GM12878 (cell line): ENCODE measurements at regions of chr5 and their contacts with region 1.

Region 1: GRCh38 chr5:143002459-143003328 is 232.5 kb downstream of the ARHGAP26 start:
- DNase-seq: peak; percentile 82
- ATAC-seq: peak; percentile 78
- H3K4me3 ChIP-seq: no peak overlapping the region
- H3K27ac ChIP-seq: peak overlapping the region; percentile 89
- H3K4me1 ChIP-seq: peaks cover 49% of the 10 kb centered on the region
- H3K27me3 ChIP-seq: no peaks in the 10 kb centered on the region
- CTCF ChIP-seq: peak; percentile 71 to 79 (median 75)
- EP300 ChIP-seq: peak; percentile 95 to 97
- POLR2A ChIP-seq: peak; percentile 47; the same call in 1 of the 2 replicates
- RAD21 ChIP-seq: peak; percentile 86

Region 2: DNA sequence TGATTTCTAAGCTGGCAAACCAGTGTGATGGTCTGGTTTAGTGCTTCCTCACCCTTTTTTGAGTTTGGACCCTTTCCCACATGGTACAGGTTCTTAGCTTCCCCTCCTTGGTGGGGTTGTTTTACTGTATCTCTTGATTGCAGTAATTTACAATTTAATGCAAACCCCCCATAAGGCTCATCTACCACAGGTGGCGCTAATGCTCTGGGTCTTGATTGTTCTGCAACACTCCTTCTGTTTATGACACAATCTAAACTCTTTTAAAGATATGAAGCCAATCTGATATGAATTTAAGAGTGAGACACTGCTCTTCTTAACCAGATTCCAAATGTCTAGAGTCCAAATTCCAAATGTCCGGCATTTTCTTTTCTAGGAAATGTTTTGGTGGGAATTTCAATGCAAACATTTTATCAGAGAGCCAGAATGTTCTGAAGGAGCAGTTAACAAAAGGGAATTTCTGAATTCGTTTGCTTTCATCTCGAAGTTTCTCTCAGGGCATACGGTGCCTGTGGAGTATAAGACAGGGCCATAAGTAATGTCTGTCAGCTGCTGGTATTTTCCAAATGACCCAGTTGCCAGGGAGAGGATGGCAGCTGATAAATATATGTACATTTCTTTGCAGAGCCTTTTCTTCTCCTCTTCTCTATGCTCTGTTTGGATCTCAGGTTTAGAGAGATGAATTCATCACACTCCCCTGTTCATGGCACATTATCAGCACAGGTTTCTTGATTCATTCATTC is 14.3 kb after region 1 on chr5:
- CTCF ChIA-PET with region 1: interaction called, 92 read pairs
- POLR2A ChIA-PET with region 1: interaction called, 12 read pairs
- RAD21 ChIA-PET with region 1: interaction called, 37 read pairs
- SMC1A ChIA-PET with region 1: interaction called, 114 read pairs
- in situ Hi-C with region 1: no loop called
- intact Hi-C with region 1: loop called (anchors 2 kb)
- DNase-seq: no peak
- ATAC-seq: peak; percentile 28
- H3K4me3 ChIP-seq: no peak overlapping the region
- H3K27ac ChIP-seq: no peak overlapping the region
- H3K4me1 ChIP-seq: peaks cover 32% of the 10 kb centered on the region
- H3K27me3 ChIP-seq: no peaks in the 10 kb centered on the region
- CTCF ChIP-seq: peak; percentile 68 to 75 (median 72)
- EP300 ChIP-seq: peak in 1 of 2 experiments; percentile 8; a peak in 1 of 4 replicates
- POLR2A ChIP-seq: no peak
- RAD21 ChIP-seq: peak; percentile 88

Region 3: GRCh38 chr5:143094087-143094521 is 91.4 kb after region 1 on chr5:
- CTCF ChIA-PET with region 1: no interaction called
- POLR2A ChIA-PET with region 1: no interaction called
- RAD21 ChIA-PET with region 1: interaction called, 15 read pairs
- SMC1A ChIA-PET with region 1: interaction called, 7 read pairs
- in situ Hi-C with region 1: no loop called
- intact Hi-C with region 1: no loop called
- DNase-seq: no peak
- ATAC-seq: peak; percentile 62
- H3K4me3 ChIP-seq: peak overlapping the region; percentile 54
- H3K27ac ChIP-seq: peak overlapping the region; percentile 34; the same call in 1 of the 2 replicates
- H3K4me1 ChIP-seq: no peaks in the 10 kb centered on the region
- H3K27me3 ChIP-seq: no peaks in the 10 kb centered on the region
- CTCF ChIP-seq: 0 out of 6 replicates have a peak, but pooled peaks of 1 of the 3 experiments have one; percentile 8
- EP300 ChIP-seq: no peak
- POLR2A ChIP-seq: no peak
- RAD21 ChIP-seq: peak; percentile 43

Region 4: GRCh38 chr5:143213851-143214363 is 211.2 kb after region 1 on chr5:
- CTCF ChIA-PET with region 1: interaction called, 24 read pairs
- POLR2A ChIA-PET with region 1: interaction called, 20 read pairs
- RAD21 ChIA-PET with region 1: interaction called, 52 read pairs
- SMC1A ChIA-PET with region 1: interaction called, 87 read pairs
- in situ Hi-C with region 1: no loop called
- intact Hi-C with region 1: no loop called
- DNase-seq: peak; percentile 97
- ATAC-seq: peak; percentile 68
- H3K4me3 ChIP-seq: peak overlapping the region; percentile 6; the same call in 1 of the 2 replicates
- H3K27ac ChIP-seq: peak overlapping the region; percentile 100
- H3K4me1 ChIP-seq: peaks cover 76% of the 10 kb centered on the region
- H3K27me3 ChIP-seq: no peaks in the 10 kb centered on the region
- CTCF ChIP-seq: peak; percentile 38 to 61 (median 47); a peak in 5 of 6 replicates
- EP300 ChIP-seq: peak; percentile 73 to 82
- POLR2A ChIP-seq: peak; percentile 45
- RAD21 ChIP-seq: peak; percentile 76

Region 5: GRCh38 chr5:143403593-143404415 is 401.1 kb after region 1 on chr5 and contains the start of gene NR3C1:
- CTCF ChIA-PET with region 1: interaction called, 13 read pairs
- POLR2A ChIA-PET with region 1: interaction called, 4 read pairs
- RAD21 ChIA-PET with region 1: interaction called, 36 read pairs
- SMC1A ChIA-PET with region 1: interaction called, 20 read pairs
- in situ Hi-C with region 1: no loop called
- intact Hi-C with region 1: no loop called
- DNase-seq: no peak
- ATAC-seq: peak; percentile 51
- H3K4me3 ChIP-seq: peak within 1 kb of the TSS; percentile 83
- H3K27ac ChIP-seq: peak within 1 kb of the TSS; percentile 99
- H3K4me1 ChIP-seq: no peaks in the 10 kb centered on the region
- H3K27me3 ChIP-seq: no peaks in the 10 kb centered on the region
- CTCF ChIP-seq: peak; percentile 38 to 76 (median 64); a peak in 5 of 6 replicates
- EP300 ChIP-seq: peak; percentile 25 to 38; a peak in 2 of 4 replicates
- POLR2A ChIP-seq: peak; percentile 78
- RAD21 ChIP-seq: peak; percentile 67
- polyA plus RNA-seq, gene NR3C1: 89.0 to 119 TPM

Region 6: GRCh38 chr5:143453720-143454119 is 451.0 kb after region 1 on chr5:
- CTCF ChIA-PET with region 1: no interaction called
- POLR2A ChIA-PET with region 1: no interaction called
- RAD21 ChIA-PET with region 1: no interaction called
- SMC1A ChIA-PET with region 1: no interaction called
- in situ Hi-C with region 1: no loop called
- intact Hi-C with region 1: no loop called
- DNase-seq: no peak
- ATAC-seq: peak; percentile 66; the same call in 2 of the 3 replicates
- H3K4me3 ChIP-seq: no peak overlapping the region
- H3K27ac ChIP-seq: no peak overlapping the region
- H3K4me1 ChIP-seq: no peaks in the 10 kb centered on the region
- H3K27me3 ChIP-seq: no peaks in the 10 kb centered on the region
- CTCF ChIP-seq: no peak
- EP300 ChIP-seq: no peak
- POLR2A ChIP-seq: no peak
- RAD21 ChIP-seq: no peak

Region 7: DNA sequence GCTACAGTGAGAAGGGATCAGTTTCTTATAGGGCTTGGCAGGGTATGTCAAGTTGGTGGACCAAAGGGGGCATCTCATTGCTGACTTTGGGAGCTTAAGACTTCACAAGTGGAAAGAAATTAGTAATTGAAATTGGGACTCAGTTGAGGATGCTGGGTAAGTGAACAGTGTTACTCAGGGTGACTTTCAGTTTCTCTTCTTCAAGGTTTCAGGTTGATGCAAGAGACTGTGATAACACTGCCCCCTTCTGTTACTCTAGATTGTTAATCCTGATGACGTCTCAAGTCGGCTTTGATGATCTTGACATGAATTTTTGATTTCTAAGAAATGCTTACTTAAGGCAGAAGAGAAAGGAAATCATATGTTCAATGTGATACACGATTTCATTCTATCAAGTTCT is 1189.3 kb after region 1 on chr5:
- CTCF ChIA-PET with region 1: interaction called, 3 read pairs
- POLR2A ChIA-PET with region 1: no interaction called
- RAD21 ChIA-PET with region 1: interaction called, 5 read pairs
- SMC1A ChIA-PET with region 1: interaction called, 4 read pairs
- in situ Hi-C with region 1: loop called (anchors 10 kb)
- intact Hi-C with region 1: loop called (anchors 5 kb)
- DNase-seq: peak; percentile 73
- ATAC-seq: peak; percentile 85
- H3K4me3 ChIP-seq: no peak overlapping the region
- H3K27ac ChIP-seq: peak overlapping the region; percentile 73
- H3K4me1 ChIP-seq: peaks cover 42% of the 10 kb centered on the region
- H3K27me3 ChIP-seq: no peaks in the 10 kb centered on the region
- CTCF ChIP-seq: peak; percentile 52 to 73 (median 69); a peak in 5 of 6 replicates
- EP300 ChIP-seq: no peak
- POLR2A ChIP-seq: no peak
- RAD21 ChIP-seq: peak; percentile 78